ENCODE measurements at regions of chr5 and their contacts with region 1.

Region 1: GRCh38 chr5:56155992-56156584 is 77.0 kb downstream of the ANKRD55 start:
- DNase-seq: no peak
- H3K4me3 ChIP-seq: no peak overlapping the region
- H3K4me3 Mint-ChIP-seq: no peak overlapping the region
- H3K27ac Mint-ChIP-seq: peak overlapping the region; percentile 90
- H3K4me1 ChIP-seq: peaks cover 69% of the 10 kb centered on the region
- H3K4me1 Mint-ChIP-seq: peaks cover 36% of the 10 kb centered on the region
- H3K27me3 ChIP-seq: no peaks in the 10 kb centered on the region
- H3K27me3 Mint-ChIP-seq: no peaks in the 10 kb centered on the region
- CTCF ChIP-seq: no peak

Region 2: DNA sequence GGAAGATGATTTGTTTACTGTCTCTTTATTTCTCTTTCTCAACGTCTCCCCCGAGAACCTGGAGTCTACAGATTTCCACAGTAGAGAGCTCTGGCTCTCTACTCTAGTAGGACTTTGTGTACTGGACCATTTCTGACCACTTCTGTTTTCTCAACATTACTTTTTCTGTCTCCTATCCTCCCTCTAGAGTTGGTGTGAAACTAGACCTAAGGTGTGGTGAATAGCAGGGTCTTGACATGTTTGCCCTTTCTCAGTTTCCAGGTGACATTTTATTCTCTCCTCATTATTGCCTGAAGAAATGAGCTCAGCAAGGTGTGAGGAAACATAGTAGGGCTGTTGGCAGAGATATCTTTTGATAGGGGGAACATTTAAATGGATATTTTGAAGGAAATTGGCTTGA is 99.2 kb before region 1 on chr5:
- CTCF ChIA-PET with region 1: no interaction called
- POLR2A ChIA-PET with region 1: no interaction called
- intact Hi-C with region 1: no loop called
- DNase-seq: no peak
- H3K4me3 ChIP-seq: no peak overlapping the region
- H3K4me3 Mint-ChIP-seq: no peak overlapping the region
- H3K27ac Mint-ChIP-seq: peak overlapping the region; percentile 47
- H3K4me1 ChIP-seq: peaks cover 66% of the 10 kb centered on the region
- H3K4me1 Mint-ChIP-seq: peaks cover 30% of the 10 kb centered on the region
- H3K27me3 ChIP-seq: no peaks in the 10 kb centered on the region
- H3K27me3 Mint-ChIP-seq: no peaks in the 10 kb centered on the region
- CTCF ChIP-seq: no peak

Region 3: GRCh38 chr5:56110646-56111403 is 45.3 kb before region 1 on chr5:
- CTCF ChIA-PET with region 1: no interaction called
- POLR2A ChIA-PET with region 1: no interaction called
- intact Hi-C with region 1: loop called (anchors 1 kb)
- DNase-seq: no peak
- H3K4me3 ChIP-seq: no peak overlapping the region
- H3K4me3 Mint-ChIP-seq: no peak overlapping the region
- H3K27ac Mint-ChIP-seq: peak overlapping the region; percentile 62
- H3K4me1 ChIP-seq: peaks cover 35% of the 10 kb centered on the region
- H3K4me1 Mint-ChIP-seq: peaks cover 33% of the 10 kb centered on the region
- H3K27me3 ChIP-seq: no peaks in the 10 kb centered on the region
- H3K27me3 Mint-ChIP-seq: no peaks in the 10 kb centered on the region
- CTCF ChIP-seq: no peak